T-cell (primary cell): ENCODE measurements at regions of chr6 and their contacts with region 1.

Region 1: DNA sequence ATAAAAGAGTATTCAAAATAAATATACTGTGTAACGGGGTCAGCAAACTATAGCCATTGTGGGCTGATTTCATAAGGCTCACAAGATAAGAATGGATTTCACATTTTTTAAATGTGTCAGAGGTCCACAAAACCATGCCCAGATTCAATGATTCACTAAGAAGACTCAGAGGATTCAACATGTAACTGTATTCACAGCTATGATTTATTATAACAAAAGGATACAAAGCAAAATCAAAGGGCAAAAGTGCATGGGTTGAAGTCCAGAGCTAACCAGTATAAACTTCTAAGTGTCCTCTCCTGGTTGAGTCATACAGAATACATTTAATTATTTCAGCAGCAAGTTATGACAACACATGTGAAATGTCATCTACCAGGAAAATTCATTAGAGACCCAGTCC is 49.2 kb downstream of the TBC1D32 start:
- DNase-seq: no peak
- ATAC-seq: no peak
- H3K4me3 ChIP-seq: no peak overlapping the region
- H3K4me3 Mint-ChIP-seq: no peak overlapping the region
- H3K27ac ChIP-seq: no peak overlapping the region
- H3K27ac Mint-ChIP-seq: no peak overlapping the region
- H3K4me1 ChIP-seq: no peaks in the 10 kb centered on the region
- H3K4me1 Mint-ChIP-seq: no peaks in the 10 kb centered on the region
- H3K27me3 ChIP-seq: no peaks in the 10 kb centered on the region
- H3K27me3 Mint-ChIP-seq: no peaks in the 10 kb centered on the region

Region 2: DNA sequence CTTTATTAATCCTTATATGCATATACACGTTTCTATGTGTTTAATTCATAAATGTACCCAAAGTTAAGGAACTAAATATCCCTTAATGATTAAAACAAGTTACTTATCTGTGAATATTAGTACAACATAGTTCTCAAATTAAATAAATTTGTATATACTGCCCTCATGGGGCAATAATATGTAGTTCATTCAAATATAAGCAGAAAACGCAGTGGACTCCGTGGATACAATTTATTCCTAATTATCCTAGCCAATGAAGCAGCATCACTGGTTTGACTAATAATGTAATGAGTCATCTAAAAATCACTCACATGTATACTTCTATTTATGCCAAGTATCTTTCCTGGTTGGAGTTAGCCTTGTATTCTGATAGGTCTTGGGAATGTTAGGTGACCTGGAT is 62.4 kb before region 1 on chr6:
- CTCF ChIA-PET with region 1: no interaction called
- POLR2A ChIA-PET with region 1: no interaction called
- DNase-seq: no peak
- ATAC-seq: no peak
- H3K4me3 ChIP-seq: no peak overlapping the region
- H3K4me3 Mint-ChIP-seq: no peak overlapping the region
- H3K27ac ChIP-seq: no peak overlapping the region
- H3K27ac Mint-ChIP-seq: no peak overlapping the region
- H3K4me1 ChIP-seq: no peaks in the 10 kb centered on the region
- H3K4me1 Mint-ChIP-seq: no peaks in the 10 kb centered on the region
- H3K27me3 ChIP-seq: no peaks in the 10 kb centered on the region
- H3K27me3 Mint-ChIP-seq: no peaks in the 10 kb centered on the region

Region 3: GRCh38 chr6:121418346-121418745 is 133.3 kb after region 1 on chr6:
- CTCF ChIA-PET with region 1: no interaction called
- POLR2A ChIA-PET with region 1: interaction called in 1 of 2 experiments, 10 read pairs
- DNase-seq: no peak
- ATAC-seq: no peak
- H3K4me3 ChIP-seq: no peak overlapping the region
- H3K4me3 Mint-ChIP-seq: no peak overlapping the region
- H3K27ac ChIP-seq: no peak overlapping the region
- H3K27ac Mint-ChIP-seq: no peak overlapping the region
- H3K4me1 ChIP-seq: no peaks in the 10 kb centered on the region
- H3K4me1 Mint-ChIP-seq: no peaks in the 10 kb centered on the region
- H3K27me3 ChIP-seq: no peaks in the 10 kb centered on the region
- H3K27me3 Mint-ChIP-seq: no peaks in the 10 kb centered on the region